Naive thymus-derived CD4-positive, alpha-beta T cell (primary cell): ENCODE measurements at regions of chr14 and their contacts with region 1.

Region 1: DNA sequence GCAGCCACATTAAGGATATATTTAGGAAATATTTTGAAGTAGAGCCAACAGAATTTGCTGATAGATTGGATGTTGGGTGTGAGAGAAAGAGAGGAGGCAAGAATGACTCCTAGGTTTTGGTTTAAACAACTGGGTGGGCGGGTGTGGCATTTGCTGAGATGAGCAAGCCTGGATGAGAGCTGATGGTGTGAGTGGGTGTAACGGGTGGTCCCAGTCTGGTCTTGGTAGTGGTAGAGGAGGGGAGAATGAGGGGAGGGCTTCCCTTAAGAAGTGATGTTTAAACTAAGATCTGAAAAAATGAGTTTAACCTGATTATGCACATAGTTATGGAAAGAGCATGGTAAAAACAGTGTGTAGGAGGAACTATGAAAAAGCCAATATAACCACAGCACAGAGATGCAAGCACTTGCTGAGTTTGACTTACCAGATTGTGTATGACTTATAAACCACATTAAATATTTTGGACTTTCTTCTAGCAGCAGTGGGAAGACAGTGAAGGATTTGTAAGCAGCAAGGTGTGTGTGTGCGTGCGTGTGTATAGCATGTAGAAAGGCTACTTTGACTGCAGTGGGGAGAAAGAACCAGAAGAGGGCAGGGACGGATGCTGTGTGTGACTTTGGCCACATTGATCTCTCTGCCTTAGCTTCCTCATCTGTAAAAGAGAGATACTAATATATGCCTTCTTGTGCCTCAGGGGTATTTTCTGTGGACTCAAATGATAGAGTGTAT is 139.7 kb downstream of the PRIMA1 start:
- DNase-seq: peak in 1 of 9 donors; percentile 23
- ATAC-seq: peak; percentile 36
- H3K4me3 ChIP-seq: no peak overlapping the region
- H3K4me3 Mint-ChIP-seq: no peak overlapping the region
- H3K27ac ChIP-seq: no peak overlapping the region
- H3K27ac Mint-ChIP-seq: no peak overlapping the region
- H3K4me1 ChIP-seq: no peaks in the 10 kb centered on the region
- H3K4me1 Mint-ChIP-seq: peaks cover 0 to 1% (median 0%) of the 10 kb centered on the region in 7 donors
- H3K27me3 ChIP-seq: no peaks in the 10 kb centered on the region
- H3K27me3 Mint-ChIP-seq: peaks cover 14 to 43% (median 36%) of the 10 kb centered on the region in 5 donors

Region 2: DNA sequence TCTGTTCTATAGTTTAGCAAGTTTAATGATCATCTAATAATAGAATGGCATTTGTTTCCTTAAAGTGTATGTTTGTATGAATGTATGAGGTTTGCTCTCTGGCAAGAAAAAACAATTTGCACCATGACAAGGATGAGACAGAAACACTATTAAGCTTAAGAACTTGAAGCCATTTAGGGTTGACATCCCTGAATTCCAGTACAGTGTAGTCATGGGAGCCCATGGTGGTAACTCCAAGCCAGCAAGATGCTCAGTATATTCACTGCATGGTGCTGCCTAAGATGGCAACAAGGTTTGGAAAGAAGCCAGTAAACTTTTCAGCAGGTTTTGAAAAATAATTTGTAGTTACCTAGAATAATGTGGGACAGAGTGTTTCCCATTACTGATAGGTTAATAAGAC is 19.0 kb before region 1 on chr14:
- CTCF ChIA-PET with region 1: no interaction called
- POLR2A ChIA-PET with region 1: no interaction called
- intact Hi-C with region 1: no loop called
- DNase-seq: no peak
- ATAC-seq: no peak
- H3K4me3 ChIP-seq: no peak overlapping the region
- H3K4me3 Mint-ChIP-seq: no peak overlapping the region
- H3K27ac ChIP-seq: no peak overlapping the region
- H3K27ac Mint-ChIP-seq: no peak overlapping the region
- H3K4me1 ChIP-seq: no peaks in the 10 kb centered on the region
- H3K4me1 Mint-ChIP-seq: no peaks in the 10 kb centered on the region
- H3K27me3 ChIP-seq: no peaks in the 10 kb centered on the region
- H3K27me3 Mint-ChIP-seq: peaks cover 22 to 40% (median 30%) of the 10 kb centered on the region in 5 donors

Region 3: GRCh38 chr14:93906341-93907329 is 258.0 kb after region 1 on chr14:
- CTCF ChIA-PET with region 1: no interaction called
- POLR2A ChIA-PET with region 1: no interaction called
- intact Hi-C with region 1: loop called in 1 of 2 experiments (anchors 5 kb)
- DNase-seq: peak in 7 of 9 donors; percentile 13 to 62 (median 28)
- ATAC-seq: peak; percentile 61
- H3K4me3 ChIP-seq: no peak overlapping the region
- H3K4me3 Mint-ChIP-seq: no peak overlapping the region
- H3K27ac ChIP-seq: no peak overlapping the region
- H3K27ac Mint-ChIP-seq: no peak overlapping the region
- H3K4me1 ChIP-seq: no peaks in the 10 kb centered on the region
- H3K4me1 Mint-ChIP-seq: peaks cover 0 to 3% (median 0%) of the 10 kb centered on the region in 7 donors
- H3K27me3 ChIP-seq: no peaks in the 10 kb centered on the region
- H3K27me3 Mint-ChIP-seq: peaks cover 20 to 27% (median 21%) of the 10 kb centered on the region in 5 donors